CD4-positive, alpha-beta memory T cell (primary cell): ENCODE measurements at regions of chr4 and their contacts with region 1.

Region 1: GRCh38 chr4:112099701-112100297 is 45.5 kb upstream of the FAM241A start:
- DNase-seq: peak in 4 of 5 donors; percentile 36 to 49 (median 44)
- H3K4me3 ChIP-seq: no peak overlapping the region
- H3K4me3 Mint-ChIP-seq: no peak overlapping the region
- H3K27ac ChIP-seq: no peak overlapping the region
- H3K27ac Mint-ChIP-seq: peak overlapping the region in 1 of 7 donors; percentile 36
- H3K4me1 ChIP-seq: no peaks in the 10 kb centered on the region
- H3K4me1 Mint-ChIP-seq: no peaks in the 10 kb centered on the region
- H3K27me3 ChIP-seq: no peaks in the 10 kb centered on the region
- H3K27me3 Mint-ChIP-seq: peaks cover 3 to 6% of the 10 kb centered on the region in 2 donors

Region 2: GRCh38 chr4:112145326-112145819 is 45.6 kb after region 1 on chr4 and contains the start of gene FAM241A:
- CTCF ChIA-PET with region 1: no interaction called
- POLR2A ChIA-PET with region 1: no interaction called
- intact Hi-C with region 1: loop called (anchors 1 kb)
- DNase-seq: peak; percentile 86 to 89 (median 86)
- H3K4me3 ChIP-seq: peak within 1 kb of the TSS; percentile 82 to 88
- H3K4me3 Mint-ChIP-seq: peak within 1 kb of the TSS; percentile 87 to 99 (median 94)
- H3K27ac ChIP-seq: peak within 1 kb of the TSS; percentile 82
- H3K27ac Mint-ChIP-seq: peak within 1 kb of the TSS; percentile 85 to 99 (median 96)
- H3K4me1 ChIP-seq: peaks cover 29% of the 10 kb centered on the region
- H3K4me1 Mint-ChIP-seq: peaks cover 22 to 34% (median 26%) of the 10 kb centered on the region in 4 donors
- H3K27me3 ChIP-seq: no peaks in the 10 kb centered on the region
- H3K27me3 Mint-ChIP-seq: no peaks in the 10 kb centered on the region
- total RNA-seq, gene FAM241A: 2.7 TPM

Region 3: DNA sequence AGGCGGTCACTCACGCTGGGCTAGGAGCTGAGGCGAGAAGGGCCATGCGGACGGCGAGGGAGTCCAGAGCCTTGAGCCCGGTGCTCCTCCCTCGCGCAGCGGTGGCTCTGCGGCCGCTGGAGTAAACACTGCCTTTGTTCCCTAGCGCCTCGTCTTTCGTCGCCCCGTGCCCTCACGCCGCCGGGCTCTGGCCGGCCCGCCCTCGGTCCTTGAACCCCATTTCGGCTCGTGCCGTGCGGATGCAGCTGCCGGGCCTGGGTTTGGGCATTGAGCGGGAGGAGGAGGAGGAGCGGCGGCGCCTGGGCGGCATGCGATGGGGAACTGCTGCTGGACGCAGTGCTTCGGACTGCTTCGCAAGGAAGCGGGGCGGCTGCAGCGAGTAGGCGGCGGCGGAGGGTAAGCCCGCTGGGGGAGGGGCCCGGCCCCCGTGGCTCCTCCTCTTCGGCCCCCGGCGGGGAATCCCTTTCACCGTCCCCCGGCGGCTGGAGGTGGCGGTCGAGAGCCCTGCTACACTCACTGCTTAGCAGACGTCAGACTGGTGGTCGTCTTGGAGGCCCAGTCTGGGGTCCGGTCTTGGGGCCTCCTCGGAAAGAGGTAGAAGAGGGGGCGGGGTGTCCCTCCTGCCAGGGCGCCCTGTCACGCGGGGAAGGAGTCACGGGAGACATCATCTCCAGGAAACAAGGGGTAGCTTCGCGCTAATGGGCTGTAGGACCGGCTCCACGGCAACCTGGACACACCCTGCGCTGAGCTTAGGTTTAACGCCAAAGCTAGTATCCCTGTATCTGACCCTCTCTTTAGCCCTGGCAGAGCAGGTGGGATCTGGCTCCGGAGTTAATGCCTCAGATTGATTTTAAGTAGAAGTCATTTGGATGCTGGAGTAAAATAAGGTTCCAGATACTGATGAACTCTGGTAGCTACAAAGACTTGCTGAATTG is 132.2 kb after region 1 on chr4 and contains the start of gene AP1AR:
- CTCF ChIA-PET with region 1: interaction called, 121 read pairs
- POLR2A ChIA-PET with region 1: interaction called, 4 read pairs
- intact Hi-C with region 1: loop called (anchors 1 kb)
- DNase-seq: peak; percentile 77 to 86 (median 79)
- H3K4me3 ChIP-seq: peak within 1 kb of the TSS; percentile 84 to 90
- H3K4me3 Mint-ChIP-seq: peak within 1 kb of the TSS; percentile 93 to 99 (median 96)
- H3K27ac ChIP-seq: peak within 1 kb of the TSS; percentile 92
- H3K27ac Mint-ChIP-seq: peak within 1 kb of the TSS; percentile 98 to 100 (median 100)
- H3K4me1 ChIP-seq: peaks cover 40% of the 10 kb centered on the region
- H3K4me1 Mint-ChIP-seq: peaks cover 18 to 45% (median 26%) of the 10 kb centered on the region in 4 donors
- H3K27me3 ChIP-seq: no peaks in the 10 kb centered on the region
- H3K27me3 Mint-ChIP-seq: no peaks in the 10 kb centered on the region
- total RNA-seq, gene AP1AR: 20.3 to 22.8 TPM

Region 4: GRCh38 chr4:112321776-112322684 is 222.2 kb after region 1 on chr4:
- CTCF ChIA-PET with region 1: interaction called, 3 read pairs
- POLR2A ChIA-PET with region 1: no interaction called
- intact Hi-C with region 1: loop called (anchors 2 kb)
- DNase-seq: peak; percentile 71 to 80 (median 73)
- H3K4me3 ChIP-seq: no peak overlapping the region
- H3K4me3 Mint-ChIP-seq: peak overlapping the region in 7 of 8 donors; percentile 33 to 73 (median 51)
- H3K27ac ChIP-seq: no peak overlapping the region
- H3K27ac Mint-ChIP-seq: peak overlapping the region in 2 of 7 donors; percentile 46 to 77
- H3K4me1 ChIP-seq: peaks cover 8% of the 10 kb centered on the region
- H3K4me1 Mint-ChIP-seq: peaks cover 5 to 15% (median 8%) of the 10 kb centered on the region in 4 donors
- H3K27me3 ChIP-seq: no peaks in the 10 kb centered on the region
- H3K27me3 Mint-ChIP-seq: no peaks in the 10 kb centered on the region

Region 5: GRCh38 chr4:112422644-112423043 is 322.8 kb after region 1 on chr4:
- CTCF ChIA-PET with region 1: no interaction called
- POLR2A ChIA-PET with region 1: no interaction called
- intact Hi-C with region 1: no loop called
- DNase-seq: no peak
- H3K4me3 ChIP-seq: no peak overlapping the region
- H3K4me3 Mint-ChIP-seq: no peak overlapping the region
- H3K27ac ChIP-seq: no peak overlapping the region
- H3K27ac Mint-ChIP-seq: no peak overlapping the region
- H3K4me1 ChIP-seq: no peaks in the 10 kb centered on the region
- H3K4me1 Mint-ChIP-seq: no peaks in the 10 kb centered on the region
- H3K27me3 ChIP-seq: no peaks in the 10 kb centered on the region
- H3K27me3 Mint-ChIP-seq: no peaks in the 10 kb centered on the region

Region 6: GRCh38 chr4:112604589-112604988 is 504.8 kb after region 1 on chr4:
- CTCF ChIA-PET with region 1: interaction called, 13 read pairs
- POLR2A ChIA-PET with region 1: interaction called, 3 read pairs
- intact Hi-C with region 1: loop called (anchors 1 kb)
- DNase-seq: peak in 4 of 5 donors; percentile 32 to 42 (median 36)
- H3K4me3 ChIP-seq: no peak overlapping the region
- H3K4me3 Mint-ChIP-seq: no peak overlapping the region
- H3K27ac ChIP-seq: no peak overlapping the region
- H3K27ac Mint-ChIP-seq: peak overlapping the region in 2 of 7 donors; percentile 23 to 42
- H3K4me1 ChIP-seq: no peaks in the 10 kb centered on the region
- H3K4me1 Mint-ChIP-seq: peaks cover 0 to 2% (median under 1%) of the 10 kb centered on the region in 4 donors
- H3K27me3 ChIP-seq: no peaks in the 10 kb centered on the region
- H3K27me3 Mint-ChIP-seq: no peaks in the 10 kb centered on the region

Region 7: DNA sequence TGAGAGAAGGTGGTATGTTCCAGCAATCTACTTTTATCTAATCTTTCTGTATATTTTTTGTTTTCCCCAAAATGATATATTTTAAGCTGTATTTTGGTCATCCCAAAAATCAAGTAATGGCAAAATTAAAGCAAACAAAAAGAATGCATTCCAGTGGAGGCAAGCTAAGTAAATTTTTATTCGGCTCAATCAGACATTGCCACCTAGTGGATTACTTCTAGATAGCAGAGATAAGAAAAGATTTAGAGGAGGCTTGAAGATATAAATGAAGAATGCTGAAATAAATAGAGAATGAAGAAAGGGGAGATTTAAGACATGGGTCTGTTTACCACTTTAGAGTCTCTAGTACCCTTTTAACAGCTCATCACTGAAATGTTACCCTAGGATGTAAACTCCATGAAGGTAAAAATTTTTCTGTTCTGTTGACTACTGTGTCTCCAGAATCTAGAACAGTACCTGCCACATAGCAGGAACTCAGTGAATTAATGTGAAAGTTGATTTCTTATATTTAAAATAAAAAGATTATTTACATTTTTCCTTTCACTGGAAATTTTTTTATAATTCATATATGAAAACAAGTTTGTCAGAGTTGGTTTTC is 838.8 kb after region 1 on chr4:
- CTCF ChIA-PET with region 1: no interaction called
- POLR2A ChIA-PET with region 1: no interaction called
- intact Hi-C with region 1: loop called (anchors 5 kb)
- DNase-seq: peak in 3 of 5 donors; percentile 1 to 11 (median 5)
- H3K4me3 ChIP-seq: no peak overlapping the region
- H3K4me3 Mint-ChIP-seq: no peak overlapping the region
- H3K27ac ChIP-seq: no peak overlapping the region
- H3K27ac Mint-ChIP-seq: no peak overlapping the region
- H3K4me1 ChIP-seq: no peaks in the 10 kb centered on the region
- H3K4me1 Mint-ChIP-seq: no peaks in the 10 kb centered on the region
- H3K27me3 ChIP-seq: no peaks in the 10 kb centered on the region
- H3K27me3 Mint-ChIP-seq: peaks cover 6 to 10% of the 10 kb centered on the region in 2 donors